ENCODE measurements at regions of chr4 and their contacts with region 1.

Region 1: DNA sequence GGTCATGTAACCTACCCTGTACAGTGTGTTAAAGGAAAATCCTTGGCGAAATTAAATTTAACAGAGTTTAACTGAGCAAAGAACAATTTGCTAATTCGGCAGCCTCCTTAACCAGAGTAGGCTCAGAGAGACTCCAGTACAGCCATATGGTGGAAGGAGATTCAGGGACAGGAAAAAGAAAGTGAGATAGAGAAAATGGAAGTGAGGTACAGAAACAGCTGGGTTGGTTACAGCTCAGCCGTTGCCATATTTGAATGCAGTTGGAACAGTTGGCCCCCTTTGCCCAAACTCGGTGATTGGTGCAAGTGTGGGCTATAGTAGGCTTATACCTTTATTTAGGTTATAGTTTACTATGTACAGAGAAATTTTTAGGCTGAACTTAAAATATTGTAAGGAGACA is 48.8 kb upstream of the GBA3 start:
- DNase-seq: no peak
- ATAC-seq: no peak
- H3K4me3 ChIP-seq: no peak overlapping the region
- H3K27ac ChIP-seq: no peak overlapping the region
- H3K4me1 ChIP-seq: no peaks in the 10 kb centered on the region
- H3K27me3 ChIP-seq: no peaks in the 10 kb centered on the region
- CTCF ChIP-seq: no peak

Region 2: GRCh38 chr4:22483551-22483981 is 160.4 kb before region 1 on chr4:
- intact Hi-C with region 1: no loop called
- DNase-seq: no peak
- ATAC-seq: no peak
- H3K4me3 ChIP-seq: no peak overlapping the region
- H3K27ac ChIP-seq: no peak overlapping the region
- H3K4me1 ChIP-seq: peaks cover 53% of the 10 kb centered on the region
- H3K27me3 ChIP-seq: no peaks in the 10 kb centered on the region
- CTCF ChIP-seq: no peak

Region 3: DNA sequence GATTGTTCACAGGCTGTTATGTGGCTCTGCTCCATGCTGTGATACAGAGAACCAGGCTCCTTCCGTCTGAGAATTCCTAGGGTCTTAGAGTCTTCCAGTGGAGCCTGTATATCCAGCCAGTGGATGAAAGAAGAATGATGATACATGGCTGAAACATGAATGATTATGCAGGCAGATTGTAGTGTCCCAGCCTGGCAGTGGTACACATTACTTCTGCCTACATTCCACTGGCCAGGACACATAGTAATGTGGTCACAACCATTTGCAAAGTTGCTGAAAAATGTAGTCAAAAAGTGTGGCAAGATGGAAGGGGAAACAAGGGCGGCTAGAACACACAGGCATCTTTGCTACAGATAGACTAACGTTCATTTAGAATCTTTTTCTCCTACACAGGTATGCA is 44.3 kb after region 1 on chr4:
- intact Hi-C with region 1: no loop called
- DNase-seq: no peak
- ATAC-seq: no peak
- H3K4me3 ChIP-seq: no peak overlapping the region
- H3K27ac ChIP-seq: no peak overlapping the region
- H3K4me1 ChIP-seq: no peaks in the 10 kb centered on the region
- H3K27me3 ChIP-seq: peaks cover 0 to 2% (median 0%) of the 10 kb centered on the region in 3 donors
- CTCF ChIP-seq: no peak

Region 4: GRCh38 chr4:23425570-23425969 is 781.6 kb after region 1 on chr4:
- intact Hi-C with region 1: loop called in 1 of 2 experiments (anchors 5 kb)
- DNase-seq: no peak
- ATAC-seq: peak; percentile 52 to 86 (median 76)
- H3K4me3 ChIP-seq: no peak overlapping the region
- H3K27ac ChIP-seq: no peak overlapping the region
- H3K4me1 ChIP-seq: peaks cover 6% of the 10 kb centered on the region
- H3K27me3 ChIP-seq: no peaks in the 10 kb centered on the region
- CTCF ChIP-seq: no peak